Activated CD4-positive, alpha-beta T cell treated with anti-CD3 and anti-CD28 coated beads for 36 hours (primary cell): ENCODE measurements at regions of chr5 and their contacts with region 1.

Region 1: GRCh38 chr5:60944904-60945812 is at the starts of genes ERCC8 and NDUFAF2:
- DNase-seq: peak; percentile 92
- ATAC-seq: peak; percentile 99
- H3K4me3 Mint-ChIP-seq: no peak within 1 kb of the TSS
- H3K27ac Mint-ChIP-seq: peak within 1 kb of the TSS; percentile 84
- H3K4me1 Mint-ChIP-seq: peaks cover 23% of the 10 kb centered on the region
- H3K27me3 Mint-ChIP-seq: no peaks in the 10 kb centered on the region
- total RNA-seq, gene ERCC8: 9.0 to 12.5 TPM
- total RNA-seq, gene NDUFAF2: 39.3 to 46.6 TPM

Region 2: GRCh38 chr5:60677844-60678664 is 267.1 kb before region 1 on chr5:
- CTCF ChIA-PET with region 1: interaction called, 3 read pairs
- POLR2A ChIA-PET with region 1: no interaction called
- intact Hi-C with region 1: loop called (anchors 5 to 10 kb)
- DNase-seq: no peak
- ATAC-seq: peak; percentile 42
- H3K4me3 Mint-ChIP-seq: no peak overlapping the region
- H3K27ac Mint-ChIP-seq: no peak overlapping the region
- H3K4me1 Mint-ChIP-seq: no peaks in the 10 kb centered on the region
- H3K27me3 Mint-ChIP-seq: no peaks in the 10 kb centered on the region

Region 3: DNA sequence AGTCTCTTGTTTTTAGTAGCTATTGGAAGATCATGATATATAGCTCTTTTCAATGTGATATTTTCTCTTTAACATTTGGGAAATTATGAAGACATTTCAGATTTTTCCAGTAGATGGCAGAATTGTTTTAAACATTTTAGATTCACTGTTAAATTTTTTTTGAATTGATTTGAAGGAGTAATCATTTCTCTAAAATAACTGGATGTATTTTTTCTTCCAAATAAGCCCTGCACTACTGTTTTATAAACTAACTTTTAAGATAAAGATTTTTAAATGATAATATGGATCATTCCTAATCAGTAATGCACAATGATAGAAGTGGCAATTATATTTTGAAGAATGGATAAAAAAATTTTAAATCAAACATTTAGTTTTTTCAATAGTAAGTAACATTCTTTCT is 14.0 kb after region 1 on chr5:
- CTCF ChIA-PET with region 1: interaction called, 8 read pairs
- POLR2A ChIA-PET with region 1: no interaction called
- intact Hi-C with region 1: loop called in 1 of 2 experiments (anchors 2 kb)
- DNase-seq: no peak
- ATAC-seq: no peak
- H3K4me3 Mint-ChIP-seq: no peak overlapping the region
- H3K27ac Mint-ChIP-seq: no peak overlapping the region
- H3K4me1 Mint-ChIP-seq: peaks cover 14% of the 10 kb centered on the region
- H3K27me3 Mint-ChIP-seq: no peaks in the 10 kb centered on the region

Region 4: DNA sequence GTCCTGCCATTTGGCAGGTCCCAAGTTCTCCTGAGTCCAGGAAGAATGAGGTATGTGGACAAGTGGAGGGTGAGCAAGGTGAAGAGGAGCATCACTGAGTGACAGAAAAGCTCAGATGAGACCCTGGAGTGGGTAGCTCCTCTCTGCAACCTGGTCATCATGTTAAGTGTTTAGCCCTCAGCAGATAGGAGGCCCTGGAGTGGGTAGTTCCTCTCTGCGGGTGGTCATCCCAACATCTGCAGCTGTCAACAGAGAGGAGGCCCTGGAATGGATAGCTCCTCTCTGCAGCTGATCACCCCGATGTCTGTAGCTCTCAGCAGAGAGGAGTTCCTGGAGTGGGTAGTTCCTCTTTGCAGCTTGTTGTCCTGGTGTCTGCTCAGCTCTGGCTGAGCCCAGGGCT is 48.3 kb after region 1 on chr5:
- CTCF ChIA-PET with region 1: no interaction called
- POLR2A ChIA-PET with region 1: no interaction called
- intact Hi-C with region 1: no loop called
- DNase-seq: no peak
- ATAC-seq: no peak
- H3K4me3 Mint-ChIP-seq: no peak overlapping the region
- H3K27ac Mint-ChIP-seq: no peak overlapping the region
- H3K4me1 Mint-ChIP-seq: peaks cover 27% of the 10 kb centered on the region
- H3K27me3 Mint-ChIP-seq: no peaks in the 10 kb centered on the region

Region 5: GRCh38 chr5:61162010-61162831 is 217.1 kb after region 1 on chr5 and contains the start of gene SMIM15:
- CTCF ChIA-PET with region 1: interaction called, 3 read pairs
- POLR2A ChIA-PET with region 1: no interaction called
- intact Hi-C with region 1: loop called in 1 of 2 experiments (anchors 1 kb)
- DNase-seq: peak; percentile 91
- ATAC-seq: peak; percentile 94
- H3K4me3 Mint-ChIP-seq: peak within 1 kb of the TSS; percentile 88
- H3K27ac Mint-ChIP-seq: peak within 1 kb of the TSS; percentile 95
- H3K4me1 Mint-ChIP-seq: peaks cover 35% of the 10 kb centered on the region
- H3K27me3 Mint-ChIP-seq: no peaks in the 10 kb centered on the region
- total RNA-seq, gene SMIM15: 73.5 to 84.0 TPM

Region 6: DNA sequence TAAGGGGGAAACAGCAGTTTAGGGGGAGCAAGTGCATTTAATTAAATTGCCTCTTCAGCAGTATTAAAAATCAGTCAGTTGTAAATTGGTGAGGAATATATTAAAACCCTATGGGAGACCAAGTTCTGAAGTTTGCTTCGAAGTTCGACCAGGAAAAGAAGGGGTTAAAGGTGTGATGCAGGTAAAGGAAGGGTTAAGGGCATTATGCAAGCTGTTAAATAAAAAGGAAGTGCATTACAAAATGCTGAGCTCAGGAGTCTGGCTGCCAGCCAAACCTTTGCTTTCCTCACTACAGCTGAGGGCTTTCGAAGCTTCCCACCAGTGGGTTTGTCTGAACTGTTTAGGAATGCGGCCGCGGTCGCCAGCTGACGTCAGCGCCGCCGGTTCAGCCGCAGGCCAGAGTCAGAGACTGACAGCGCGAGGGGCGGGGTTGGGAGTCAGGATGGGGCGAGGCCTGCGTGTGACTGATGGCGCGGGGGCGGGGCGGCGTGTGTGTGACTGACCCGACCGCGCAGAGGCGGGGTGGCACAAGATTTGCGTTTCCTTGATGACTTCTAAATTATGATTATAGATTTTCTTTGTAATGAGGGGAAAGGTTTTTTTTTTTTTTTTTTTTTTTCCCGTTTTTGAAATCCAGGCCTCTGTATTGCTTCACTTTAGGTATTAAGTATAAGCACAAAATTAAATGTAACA is 463.5 kb after region 1 on chr5:
- CTCF ChIA-PET with region 1: no interaction called
- POLR2A ChIA-PET with region 1: no interaction called
- intact Hi-C with region 1: loop called in 1 of 2 experiments (anchors 5 kb)
- DNase-seq: peak; percentile 99
- ATAC-seq: peak; percentile 99
- H3K4me3 Mint-ChIP-seq: peak overlapping the region; percentile 59
- H3K27ac Mint-ChIP-seq: peak overlapping the region; percentile 51
- H3K4me1 Mint-ChIP-seq: peaks cover 31% of the 10 kb centered on the region
- H3K27me3 Mint-ChIP-seq: no peaks in the 10 kb centered on the region